Left ventricle myocardium inferior (tissue), 1 donor: ENCODE measurements at regions of chr3 and their contacts with region 1.

Region 1: DNA sequence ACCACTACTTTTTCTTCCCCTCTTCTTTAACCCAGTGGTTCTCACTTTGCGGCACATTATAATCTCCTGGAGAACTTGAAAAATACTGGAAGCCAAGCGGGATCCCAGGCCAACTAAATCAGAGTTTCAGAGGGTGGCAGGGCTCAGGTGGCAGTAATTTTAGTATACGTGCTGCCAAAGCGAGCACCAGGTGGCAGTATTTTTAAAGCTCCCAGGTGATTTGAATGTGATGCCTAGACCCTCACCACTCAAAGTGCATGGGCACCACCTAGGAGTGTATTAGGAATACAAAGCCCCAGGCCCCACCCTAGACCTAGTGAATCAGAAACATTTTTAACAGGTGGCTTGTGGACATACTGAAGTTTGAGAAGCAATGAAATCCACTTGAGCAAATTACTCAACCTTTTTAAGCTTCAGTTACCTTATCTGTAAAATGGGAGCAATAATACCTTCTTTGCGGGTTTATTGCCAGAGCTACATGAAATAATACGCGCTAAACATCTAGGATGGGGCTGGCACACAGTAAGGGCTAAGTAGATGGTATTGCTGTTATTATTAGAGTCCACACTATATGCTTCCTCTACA is 8.3 kb downstream of the B3GALNT1 start:
- DNase-seq: no peak
- H3K4me3 ChIP-seq: no peak overlapping the region
- H3K27ac ChIP-seq: peak overlapping the region; percentile 91
- H3K4me1 ChIP-seq: peaks cover 61% of the 10 kb centered on the region
- H3K27me3 ChIP-seq: no peaks in the 10 kb centered on the region
- CTCF ChIP-seq: peak; percentile 54

Region 2: GRCh38 chr3:160986069-160986468 is 110.8 kb before region 1 on chr3:
- intact Hi-C with region 1: no loop called
- DNase-seq: no peak
- H3K4me3 ChIP-seq: no peak overlapping the region
- H3K27ac ChIP-seq: no peak overlapping the region
- H3K4me1 ChIP-seq: peaks cover 21% of the 10 kb centered on the region
- H3K27me3 ChIP-seq: no peaks in the 10 kb centered on the region
- CTCF ChIP-seq: no peak

Region 3: GRCh38 chr3:161014843-161015749 is 81.8 kb before region 1 on chr3:
- intact Hi-C with region 1: no loop called
- DNase-seq: no peak
- H3K4me3 ChIP-seq: no peak overlapping the region
- H3K27ac ChIP-seq: peak overlapping the region; percentile 66
- H3K4me1 ChIP-seq: peaks cover 33% of the 10 kb centered on the region
- H3K27me3 ChIP-seq: no peaks in the 10 kb centered on the region
- CTCF ChIP-seq: no peak

Region 4: GRCh38 chr3:161220850-161221753 is 124.2 kb after region 1 on chr3 and contains the start of gene NMD3:
- intact Hi-C with region 1: loop called (anchors 10 kb)
- DNase-seq: peak; percentile 96
- H3K4me3 ChIP-seq: peak within 1 kb of the TSS; percentile 98
- H3K27ac ChIP-seq: peak within 1 kb of the TSS; percentile 97
- H3K4me1 ChIP-seq: peaks cover 58% of the 10 kb centered on the region
- H3K27me3 ChIP-seq: no peaks in the 10 kb centered on the region
- CTCF ChIP-seq: no peak
- total RNA-seq, gene NMD3: 51.6 TPM

Region 5: GRCh38 chr3:161413127-161413849 is 316.4 kb after region 1 on chr3:
- intact Hi-C with region 1: loop called (anchors 10 kb)
- DNase-seq: peak; percentile 65
- H3K4me3 ChIP-seq: no peak overlapping the region
- H3K27ac ChIP-seq: peak overlapping the region; percentile 42
- H3K4me1 ChIP-seq: peaks cover 41% of the 10 kb centered on the region
- H3K27me3 ChIP-seq: no peaks in the 10 kb centered on the region
- CTCF ChIP-seq: no peak

Region 6: DNA sequence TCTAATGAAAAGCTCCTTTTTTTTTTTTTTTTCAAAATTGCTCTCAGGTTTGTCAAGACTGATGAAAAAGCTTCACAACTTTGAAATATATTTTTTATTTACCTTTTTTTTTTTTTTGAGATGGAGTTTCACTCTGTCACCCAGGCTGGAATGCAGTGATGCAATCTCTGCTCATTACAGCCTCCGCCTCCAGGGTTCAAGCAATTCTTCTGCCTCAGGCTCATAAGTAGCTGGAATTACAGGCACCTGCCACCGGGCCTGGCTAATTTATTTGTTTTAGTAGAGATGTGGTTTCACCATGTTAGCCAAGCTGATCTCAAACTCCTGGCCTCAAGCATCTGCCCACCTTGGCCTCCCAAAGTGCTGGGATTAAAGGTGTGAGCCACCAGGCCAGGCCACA is 1914.7 kb after region 1 on chr3:
- intact Hi-C with region 1: no loop called
- DNase-seq: no peak
- H3K4me3 ChIP-seq: no peak overlapping the region
- H3K27ac ChIP-seq: no peak overlapping the region
- H3K4me1 ChIP-seq: no peaks in the 10 kb centered on the region
- H3K27me3 ChIP-seq: no peaks in the 10 kb centered on the region
- CTCF ChIP-seq: no peak